ENCODE measurements at regions of chr19 and their contacts with region 1.

Region 1: GRCh38 chr19:41859618-41860418 is at the start of gene RPS19:
- DNase-seq: peak; percentile 98 to 99
- ATAC-seq: peak; percentile 94 to 97 (median 94)
- H3K4me3 ChIP-seq: peak within 1 kb of the TSS; percentile 94
- H3K27ac ChIP-seq: peak within 1 kb of the TSS; percentile 93
- H3K4me1 ChIP-seq: peaks cover 19% of the 10 kb centered on the region
- H3K27me3 ChIP-seq: peaks cover 0 to 3% (median 0%) of the 10 kb centered on the region in 3 donors
- CTCF ChIP-seq: peak; percentile 60
- total RNA-seq, gene RPS19: 593 to 962 (median 730) TPM

Region 2: GRCh38 chr19:41883821-41884733 is 24.3 kb after region 1 on chr19:
- intact Hi-C with region 1: loop called in 1 of 2 experiments (anchors 1 kb)
- DNase-seq: peak; percentile 95 to 97
- ATAC-seq: peak; percentile 98 to 99 (median 98)
- H3K4me3 ChIP-seq: peak overlapping the region; percentile 74
- H3K27ac ChIP-seq: peak overlapping the region; percentile 67
- H3K4me1 ChIP-seq: peaks cover 6% of the 10 kb centered on the region
- H3K27me3 ChIP-seq: peaks cover 0 to 8% (median 0%) of the 10 kb centered on the region in 3 donors
- CTCF ChIP-seq: peak; percentile 16